ENCODE measurements at regions of chr17 and their contacts with region 1.

Region 1: GRCh38 chr17:39704821-39705551 is 5.1 kb downstream of the ERBB2 start:
- DNase-seq: no peak
- H3K4me3 ChIP-seq: no peak overlapping the region; the same call in 1 of the 2 replicates
- H3K27ac ChIP-seq: peak overlapping the region; percentile 68
- H3K4me1 ChIP-seq: peaks cover 72% of the 10 kb centered on the region
- H3K27me3 ChIP-seq: no peaks in the 10 kb centered on the region
- CTCF ChIP-seq: no peak

Region 2: DNA sequence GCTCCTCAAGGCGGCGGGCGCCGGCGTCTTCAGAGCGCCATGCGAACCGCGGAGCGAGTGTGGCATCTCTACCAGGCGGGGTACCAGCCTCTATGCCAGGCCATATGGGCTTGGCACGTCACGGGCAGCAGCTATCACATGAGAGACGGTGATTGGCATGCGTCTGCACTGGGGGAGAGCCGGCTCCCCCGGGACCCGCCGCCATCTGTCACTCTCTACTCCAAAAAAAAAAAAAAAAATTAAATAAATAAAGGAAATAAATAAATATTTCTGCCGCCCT is 97.2 kb before region 1 on chr17 and contains the start of gene NEUROD2:
- CTCF ChIA-PET with region 1: interaction called, 15 read pairs
- POLR2A ChIA-PET with region 1: no interaction called
- intact Hi-C with region 1: no loop called
- DNase-seq: no peak
- H3K4me3 ChIP-seq: no peak within 1 kb of the TSS
- H3K27ac ChIP-seq: no peak within 1 kb of the TSS
- H3K4me1 ChIP-seq: no peaks in the 10 kb centered on the region
- H3K27me3 ChIP-seq: peaks cover 52% of the 10 kb centered on the region
- CTCF ChIP-seq: no peak
- total RNA-seq, gene NEUROD2: not detected in 2 replicates

Region 3: GRCh38 chr17:39671651-39672521 is 33.1 kb before region 1 on chr17:
- CTCF ChIA-PET with region 1: no interaction called
- POLR2A ChIA-PET with region 1: interaction called, 9 read pairs
- intact Hi-C with region 1: loop called (anchors 2 kb)
- DNase-seq: no peak
- H3K4me3 ChIP-seq: no peak overlapping the region
- H3K27ac ChIP-seq: no peak overlapping the region
- H3K4me1 ChIP-seq: peaks cover 52% of the 10 kb centered on the region
- H3K27me3 ChIP-seq: no peaks in the 10 kb centered on the region
- CTCF ChIP-seq: peak; percentile 63

Region 4: GRCh38 chr17:39730095-39730921 is 25.3 kb after region 1 on chr17 and contains the start of gene MIEN1:
- CTCF ChIA-PET with region 1: interaction called, 11 read pairs
- POLR2A ChIA-PET with region 1: interaction called, 5 read pairs
- intact Hi-C with region 1: no loop called
- DNase-seq: peak; percentile 71 to 95
- H3K4me3 ChIP-seq: peak within 1 kb of the TSS; percentile 76
- H3K27ac ChIP-seq: peak within 1 kb of the TSS; percentile 69
- H3K4me1 ChIP-seq: peaks cover 24% of the 10 kb centered on the region
- H3K27me3 ChIP-seq: no peaks in the 10 kb centered on the region
- CTCF ChIP-seq: peak; percentile 88
- total RNA-seq, gene MIEN1: 49.2 and 50.8 TPM in 2 replicates

Region 5: DNA sequence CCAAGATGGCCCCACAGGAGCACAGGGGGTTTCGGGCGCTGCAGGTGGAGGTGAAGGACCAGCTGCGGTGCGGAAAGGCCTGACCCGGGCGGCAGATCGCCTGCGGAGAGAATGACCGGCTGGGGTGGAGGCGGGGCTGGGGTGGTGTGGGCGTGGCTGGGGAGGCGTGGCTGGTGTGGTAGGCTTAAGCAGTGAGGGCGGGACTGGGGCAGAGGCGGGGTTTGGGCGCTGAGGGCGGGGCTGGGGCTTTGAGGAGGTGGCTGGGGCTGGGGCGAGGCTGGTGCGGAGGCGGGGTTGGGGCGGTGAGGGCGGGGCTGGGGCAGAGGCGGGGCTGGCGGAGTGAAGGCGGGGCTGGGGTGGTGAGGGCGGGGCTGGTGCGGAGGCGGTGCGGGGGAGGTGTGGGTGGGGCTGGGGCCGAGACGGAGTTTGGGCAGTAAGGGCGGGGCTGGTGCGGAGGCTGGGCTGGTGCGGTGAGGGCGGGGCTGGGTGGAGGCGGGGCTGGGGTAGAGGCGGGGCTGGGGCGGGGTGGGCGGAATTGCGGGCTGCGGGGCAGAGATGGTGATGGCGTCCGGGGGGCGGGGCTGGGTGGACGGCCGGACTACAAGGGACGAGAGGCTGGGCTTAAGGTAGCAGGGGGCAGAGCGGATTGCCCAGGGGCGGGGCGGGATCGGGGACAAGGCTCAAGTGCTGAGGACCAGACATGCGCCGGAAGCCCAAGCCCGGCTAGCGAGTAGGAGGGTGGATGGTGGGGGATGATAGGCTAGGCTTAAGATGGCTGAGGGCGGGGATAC is 247.9 kb after region 1 on chr17:
- CTCF ChIA-PET with region 1: no interaction called
- POLR2A ChIA-PET with region 1: no interaction called
- intact Hi-C with region 1: no loop called
- DNase-seq: peak; percentile 80 to 88
- H3K4me3 ChIP-seq: peak overlapping the region; percentile 41; the same call in 1 of the 2 replicates
- H3K27ac ChIP-seq: no peak overlapping the region
- H3K4me1 ChIP-seq: peaks cover 20% of the 10 kb centered on the region
- H3K27me3 ChIP-seq: no peaks in the 10 kb centered on the region
- CTCF ChIP-seq: no peak